ENCODE measurements at regions of chr3 and their contacts with region 1.

Region 1: GRCh38 chr3:196609343-196609775 is 30.1 kb upstream of the NRROS start:
- DNase-seq: peak; percentile 96
- H3K27ac ChIP-seq: no peak overlapping the region
- CTCF ChIP-seq: peak; percentile 86

Region 2: GRCh38 chr3:196186651-196187573 is 422.4 kb before region 1 on chr3:
- CTCF ChIA-PET with region 1: no interaction called
- POLR2A ChIA-PET with region 1: no interaction called
- DNase-seq: no peak
- H3K27ac ChIP-seq: no peak overlapping the region
- CTCF ChIP-seq: no peak

Region 3: DNA sequence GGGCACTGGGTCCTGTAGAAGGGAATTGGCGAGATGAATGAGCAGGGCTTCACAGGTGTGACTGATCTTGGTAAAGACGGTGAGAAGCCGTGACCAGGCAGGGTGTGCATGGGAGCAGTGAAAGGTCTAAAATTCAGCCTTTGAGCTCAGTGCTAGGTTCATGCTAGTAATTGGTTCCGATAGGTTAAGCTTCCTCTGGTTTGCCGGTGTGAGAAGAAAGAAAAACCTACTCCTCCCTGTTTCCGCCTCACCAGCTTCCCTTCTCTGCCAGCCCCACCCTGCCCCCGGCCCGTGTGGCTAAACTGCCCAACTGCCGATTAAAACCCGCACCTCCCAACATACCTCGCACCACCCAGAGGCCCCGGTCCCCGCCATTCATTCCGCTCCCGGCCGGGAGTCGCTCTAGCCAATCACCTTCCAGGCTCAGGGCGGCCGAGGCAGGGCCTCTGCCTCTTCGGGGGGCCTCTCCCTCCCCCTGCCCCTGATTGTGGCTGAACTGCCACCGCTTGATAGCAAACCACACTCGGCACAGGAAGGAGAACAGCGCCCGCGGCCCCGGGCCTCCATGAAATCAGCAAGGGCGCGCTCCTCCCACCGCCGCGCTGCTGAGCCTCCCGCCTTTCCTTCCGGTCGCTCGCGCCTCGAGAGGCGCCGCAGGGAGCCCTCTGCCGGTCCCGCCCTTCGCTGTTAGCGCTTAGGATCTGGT is 22.8 kb after region 1 on chr3:
- CTCF ChIA-PET with region 1: interaction called, 11 read pairs
- POLR2A ChIA-PET with region 1: no interaction called
- DNase-seq: peak; percentile 82
- H3K27ac ChIP-seq: peak overlapping the region; percentile 91
- CTCF ChIP-seq: no peak; the same call in 1 of the 2 replicates

Region 4: DNA sequence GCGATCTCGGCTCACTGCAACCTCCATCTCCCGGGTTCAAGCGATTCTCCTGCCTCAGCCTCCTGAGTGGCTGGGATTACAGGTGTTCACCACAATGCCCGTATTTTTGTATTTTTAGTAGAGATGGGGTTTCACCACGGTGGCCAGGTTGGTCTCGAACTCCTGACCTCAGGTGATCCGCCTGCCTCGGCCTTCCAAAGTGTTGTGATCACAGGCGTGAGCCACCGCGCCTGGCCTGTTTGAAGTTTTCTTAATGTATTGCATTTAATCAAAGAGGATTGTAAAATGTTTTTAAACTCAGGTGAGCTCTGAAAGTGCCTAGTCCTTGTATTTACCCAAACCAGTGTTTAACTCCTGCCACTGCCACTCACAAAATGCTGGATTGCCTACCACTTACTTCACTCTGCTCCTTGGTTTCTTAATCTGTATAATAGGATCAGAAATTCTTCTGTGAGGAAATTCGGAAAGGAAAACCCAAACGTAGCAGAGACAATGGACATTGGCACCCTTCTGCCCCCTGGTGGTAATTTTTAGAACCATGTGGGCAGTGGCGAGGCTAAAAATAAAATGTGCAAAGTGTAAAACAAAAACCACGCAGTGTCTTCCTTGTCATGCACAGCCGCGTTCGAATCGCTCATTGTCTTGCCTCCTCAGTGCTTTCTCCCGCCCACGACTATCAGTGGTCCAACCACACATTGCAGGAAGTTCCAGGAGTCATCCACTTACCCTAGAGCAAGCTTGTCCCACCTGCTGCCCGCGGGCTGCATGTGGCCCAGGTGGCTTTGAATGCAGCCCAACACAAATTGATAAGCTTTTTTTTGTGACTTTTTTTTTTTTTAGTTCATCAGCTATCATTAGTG is 75.4 kb after region 1 on chr3:
- CTCF ChIA-PET with region 1: interaction called, 41 read pairs
- POLR2A ChIA-PET with region 1: no interaction called
- DNase-seq: peak; percentile 55
- H3K27ac ChIP-seq: no peak overlapping the region
- CTCF ChIP-seq: peak; percentile 89

Region 5: GRCh38 chr3:196726788-196727675 is 117.7 kb after region 1 on chr3:
- CTCF ChIA-PET with region 1: no interaction called
- POLR2A ChIA-PET with region 1: no interaction called
- DNase-seq: peak; percentile 14
- H3K27ac ChIP-seq: no peak overlapping the region
- CTCF ChIP-seq: no peak

Measured in RWPE1 (cell line).